CD8-positive, alpha-beta T cell (primary cell): ENCODE measurements at regions of chr1 and their contacts with region 1.

Region 1: GRCh38 chr1:55078470-55078869 is 39.1 kb downstream of the PCSK9 start:
- DNase-seq: no peak
- ATAC-seq: no peak
- H3K4me3 ChIP-seq: no peak overlapping the region
- H3K4me3 Mint-ChIP-seq: no peak overlapping the region
- H3K27ac ChIP-seq: no peak overlapping the region
- H3K27ac Mint-ChIP-seq: no peak overlapping the region
- H3K4me1 ChIP-seq: no peaks in the 10 kb centered on the region
- H3K4me1 Mint-ChIP-seq: no peaks in the 10 kb centered on the region
- H3K27me3 ChIP-seq: no peaks in the 10 kb centered on the region
- H3K27me3 Mint-ChIP-seq: no peaks in the 10 kb centered on the region
- CTCF ChIP-seq: no peak

Region 2: DNA sequence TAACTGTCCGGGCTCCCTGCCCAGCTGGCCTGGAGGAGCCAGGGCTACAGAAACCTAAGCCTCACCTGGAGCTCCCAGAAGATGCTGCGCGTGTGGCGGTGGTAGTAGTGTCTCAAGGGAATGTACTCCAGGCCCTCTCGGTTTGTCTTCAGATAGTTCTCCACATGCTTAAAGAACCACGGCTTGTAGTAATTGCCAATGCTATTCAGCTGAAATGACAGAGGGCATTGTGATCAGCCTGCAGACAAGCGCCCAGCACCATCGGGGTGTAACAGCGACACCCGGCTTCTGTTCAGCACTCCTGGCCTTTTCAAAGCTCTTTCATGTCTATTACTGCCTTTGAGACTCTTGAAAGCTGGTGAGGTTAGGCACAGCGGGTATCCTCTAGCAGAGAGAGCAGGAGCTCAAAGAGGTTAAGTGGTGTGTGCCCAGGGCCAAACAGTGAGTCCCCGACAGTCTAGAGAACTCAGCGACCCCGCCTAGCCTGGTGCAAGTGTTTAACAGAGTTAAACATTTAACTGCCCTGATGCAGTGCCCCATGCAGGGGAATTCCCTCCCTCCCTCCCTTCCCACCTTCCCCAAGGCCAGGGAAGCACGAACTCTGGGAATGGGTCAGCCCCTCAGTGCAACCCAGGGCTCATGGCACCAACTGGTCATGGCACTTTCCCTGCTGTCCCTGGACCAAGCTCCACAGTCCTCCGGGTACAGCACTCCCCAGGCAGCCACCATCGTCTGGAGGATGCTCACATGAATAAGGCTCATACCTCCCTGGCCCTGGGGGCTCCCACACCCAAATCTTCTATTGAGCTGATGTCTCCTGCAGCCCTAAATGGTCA is 213.0 kb before region 1 on chr1:
- CTCF ChIA-PET with region 1: no interaction called
- POLR2A ChIA-PET with region 1: no interaction called
- intact Hi-C with region 1: no loop called
- DNase-seq: no peak
- ATAC-seq: no peak
- H3K4me3 ChIP-seq: no peak overlapping the region
- H3K4me3 Mint-ChIP-seq: no peak overlapping the region
- H3K27ac ChIP-seq: no peak overlapping the region
- H3K27ac Mint-ChIP-seq: no peak overlapping the region
- H3K4me1 ChIP-seq: no peaks in the 10 kb centered on the region
- H3K4me1 Mint-ChIP-seq: no peaks in the 10 kb centered on the region
- H3K27me3 ChIP-seq: no peaks in the 10 kb centered on the region
- H3K27me3 Mint-ChIP-seq: no peaks in the 10 kb centered on the region
- CTCF ChIP-seq: no peak

Region 3: DNA sequence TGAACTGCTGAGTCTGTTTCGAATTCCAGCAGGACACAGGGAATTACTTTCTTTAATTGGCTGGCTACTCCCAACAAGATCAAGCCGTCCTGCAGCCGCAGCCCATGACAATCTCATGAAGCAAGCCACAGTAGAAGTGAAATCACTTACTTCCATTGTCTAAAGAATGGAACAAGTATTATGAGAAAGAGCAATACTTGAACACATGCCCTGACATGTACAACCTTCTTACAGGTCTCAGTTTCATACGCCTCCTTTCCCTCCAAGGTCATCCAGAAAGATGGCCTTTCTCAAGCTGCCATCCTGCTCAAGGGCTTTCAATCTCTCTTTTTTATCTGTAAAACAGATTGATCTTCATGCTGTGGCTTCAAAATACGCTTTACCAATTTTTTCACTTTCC is 46.0 kb after region 1 on chr1:
- CTCF ChIA-PET with region 1: no interaction called
- POLR2A ChIA-PET with region 1: interaction called, 3 read pairs
- intact Hi-C with region 1: loop called in 1 of 2 experiments (anchors 5 kb)
- DNase-seq: no peak
- ATAC-seq: no peak
- H3K4me3 ChIP-seq: no peak overlapping the region
- H3K4me3 Mint-ChIP-seq: no peak overlapping the region
- H3K27ac ChIP-seq: no peak overlapping the region
- H3K27ac Mint-ChIP-seq: peak overlapping the region; percentile 55
- H3K4me1 ChIP-seq: no peaks in the 10 kb centered on the region
- H3K4me1 Mint-ChIP-seq: peaks cover 12% of the 10 kb centered on the region
- H3K27me3 ChIP-seq: no peaks in the 10 kb centered on the region
- H3K27me3 Mint-ChIP-seq: no peaks in the 10 kb centered on the region
- CTCF ChIP-seq: no peak